Aorta (tissue), 5 donors: ENCODE measurements at regions of chr15 and their contacts with region 1.

Region 1: GRCh38 chr15:45457641-45458433 is 64.7 kb downstream of the SLC30A4 start:
- DNase-seq: peak; percentile 66 to 79
- ATAC-seq: peak; percentile 94
- H3K4me3 ChIP-seq: peak overlapping the region; percentile 55 to 79
- H3K27ac ChIP-seq: no peak overlapping the region
- H3K4me1 ChIP-seq: no peaks in the 10 kb centered on the region
- H3K27me3 ChIP-seq: no peaks in the 10 kb centered on the region

Region 2: DNA sequence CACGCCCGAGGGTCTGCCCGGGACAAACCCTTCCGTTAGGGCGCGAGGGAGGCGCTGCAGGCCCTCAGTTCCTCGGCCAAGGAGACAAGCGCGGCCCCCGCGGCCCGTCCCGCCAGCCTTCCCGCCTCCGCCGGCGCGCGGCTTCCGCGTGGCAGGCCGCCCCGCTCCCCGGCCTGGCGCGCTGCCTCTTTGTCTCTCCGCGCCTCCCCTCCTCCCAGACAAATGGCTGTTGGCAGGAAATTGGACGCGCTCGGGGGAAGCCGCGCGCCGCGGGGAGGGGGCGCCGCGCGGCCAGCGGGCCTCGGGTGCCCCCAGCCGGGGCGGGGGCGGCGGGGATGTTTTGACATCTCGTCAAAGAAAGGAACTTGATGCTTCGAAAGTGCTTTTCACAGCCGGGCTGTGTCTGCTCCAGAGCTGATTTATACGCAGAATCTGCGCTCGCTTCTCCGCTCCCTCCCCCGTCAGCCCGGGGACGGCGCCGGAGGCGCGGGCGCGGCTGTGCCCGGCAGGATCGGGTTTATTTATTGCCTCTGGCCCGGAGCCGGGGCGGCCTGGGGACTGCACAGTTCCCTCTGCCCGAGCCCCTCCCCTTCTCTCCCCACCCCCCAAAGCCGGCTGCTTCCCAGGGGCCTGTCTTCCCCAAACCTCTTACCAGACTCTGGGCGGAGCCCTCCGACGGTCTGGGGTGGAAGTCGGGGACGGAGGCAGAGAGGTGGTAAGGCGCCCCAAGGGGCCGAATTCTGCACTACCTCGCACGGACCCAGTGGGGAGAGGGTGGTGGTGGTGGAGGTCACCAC is 290.8 kb before region 1 on chr15:
- intact Hi-C with region 1: loop called (anchors 2 to 5 kb)
- DNase-seq: peak; percentile 94
- ATAC-seq: peak; percentile 81
- H3K4me3 ChIP-seq: peak overlapping the region; percentile 69 to 83
- H3K27ac ChIP-seq: peak overlapping the region; percentile 88 to 89
- H3K4me1 ChIP-seq: no peaks in the 10 kb centered on the region
- H3K27me3 ChIP-seq: no peaks in the 10 kb centered on the region

Region 3: DNA sequence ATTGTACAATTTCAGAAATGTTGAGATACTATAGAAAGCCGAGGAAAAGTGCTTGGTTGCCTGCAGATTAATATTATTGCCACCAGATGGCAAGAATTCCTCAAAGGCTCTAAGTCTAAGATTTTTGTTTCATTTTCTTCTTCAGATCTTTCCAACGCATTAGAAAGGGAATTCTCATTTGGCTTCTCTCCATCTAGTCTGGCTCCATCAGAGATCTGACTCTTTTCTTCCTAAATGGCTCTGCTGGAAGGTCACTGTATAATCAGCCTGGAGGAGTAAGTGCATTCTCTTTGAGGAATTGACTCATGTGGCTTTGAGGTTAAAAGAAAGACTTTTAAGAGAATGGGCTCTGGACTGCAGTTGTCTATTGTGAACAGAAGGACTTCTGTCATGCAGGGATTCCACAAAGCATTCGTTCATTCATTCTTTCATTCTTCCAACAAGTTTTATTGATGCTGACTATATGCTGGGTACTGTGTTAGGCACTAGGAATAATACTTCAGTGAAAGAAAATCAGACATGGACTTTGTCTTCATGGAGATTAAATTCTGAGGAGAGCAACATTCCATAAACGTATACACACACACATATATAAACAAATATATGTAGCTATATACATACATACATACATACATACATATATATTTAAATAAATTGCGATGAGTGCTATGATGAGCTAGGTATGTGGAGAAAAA is 150.5 kb before region 1 on chr15:
- intact Hi-C with region 1: loop called in 1 of 2 experiments (anchors 5 kb)
- DNase-seq: no peak
- ATAC-seq: peak; percentile 69
- H3K4me3 ChIP-seq: peak overlapping the region in 1 of 2 donors; percentile 54
- H3K27ac ChIP-seq: no peak overlapping the region
- H3K4me1 ChIP-seq: no peaks in the 10 kb centered on the region
- H3K27me3 ChIP-seq: no peaks in the 10 kb centered on the region

Region 4: GRCh38 chr15:45611305-45611704 is 153.5 kb after region 1 on chr15:
- intact Hi-C with region 1: loop called (anchors 5 kb)
- DNase-seq: no peak
- ATAC-seq: no peak
- H3K4me3 ChIP-seq: no peak overlapping the region
- H3K27ac ChIP-seq: no peak overlapping the region
- H3K4me1 ChIP-seq: no peaks in the 10 kb centered on the region
- H3K27me3 ChIP-seq: no peaks in the 10 kb centered on the region